CD8-positive, alpha-beta T cell (primary cell): ENCODE measurements at regions of chr12 and their contacts with region 1.

Region 1: DNA sequence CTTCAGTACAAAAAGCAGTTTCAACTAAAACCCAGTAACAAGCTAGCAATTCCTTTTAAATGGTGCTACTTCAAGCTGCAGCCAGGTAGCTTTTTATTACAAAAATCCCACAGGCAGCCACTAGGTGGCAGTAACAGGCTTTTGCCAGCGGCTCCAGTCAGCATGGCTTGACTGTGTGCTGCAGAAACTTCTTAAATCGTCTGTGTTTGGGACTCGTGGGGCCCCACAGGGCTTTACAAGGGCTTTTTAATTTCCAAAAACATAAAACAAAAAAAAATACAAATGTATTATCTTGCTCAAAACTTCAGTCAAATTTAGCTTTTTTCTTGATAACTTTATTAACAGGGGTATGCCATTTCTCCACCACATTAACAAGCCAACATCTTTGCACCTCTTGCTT is 3.6 kb upstream of the CLEC4E start:
- DNase-seq: peak; percentile 46 to 84 (median 75)
- ATAC-seq: peak; percentile 81
- H3K4me3 ChIP-seq: no peak overlapping the region
- H3K4me3 Mint-ChIP-seq: peak overlapping the region; percentile 13
- H3K27ac ChIP-seq: no peak overlapping the region
- H3K27ac Mint-ChIP-seq: no peak overlapping the region
- H3K4me1 ChIP-seq: no peaks in the 10 kb centered on the region
- H3K4me1 Mint-ChIP-seq: peaks cover 9% of the 10 kb centered on the region
- H3K27me3 ChIP-seq: no peaks in the 10 kb centered on the region
- H3K27me3 Mint-ChIP-seq: peaks cover 14% of the 10 kb centered on the region
- CTCF ChIP-seq: peak; percentile 95

Region 2: GRCh38 chr12:8554451-8555195 is 10.3 kb after region 1 on chr12:
- CTCF ChIA-PET with region 1: interaction called, 22 read pairs
- POLR2A ChIA-PET with region 1: interaction called, 3 read pairs
- intact Hi-C with region 1: no loop called
- DNase-seq: no peak
- ATAC-seq: no peak
- H3K4me3 ChIP-seq: no peak overlapping the region
- H3K4me3 Mint-ChIP-seq: no peak overlapping the region
- H3K27ac ChIP-seq: no peak overlapping the region
- H3K27ac Mint-ChIP-seq: no peak overlapping the region
- H3K4me1 ChIP-seq: no peaks in the 10 kb centered on the region
- H3K4me1 Mint-ChIP-seq: no peaks in the 10 kb centered on the region
- H3K27me3 ChIP-seq: no peaks in the 10 kb centered on the region
- H3K27me3 Mint-ChIP-seq: peaks cover 2% of the 10 kb centered on the region
- CTCF ChIP-seq: no peak

Region 3: DNA sequence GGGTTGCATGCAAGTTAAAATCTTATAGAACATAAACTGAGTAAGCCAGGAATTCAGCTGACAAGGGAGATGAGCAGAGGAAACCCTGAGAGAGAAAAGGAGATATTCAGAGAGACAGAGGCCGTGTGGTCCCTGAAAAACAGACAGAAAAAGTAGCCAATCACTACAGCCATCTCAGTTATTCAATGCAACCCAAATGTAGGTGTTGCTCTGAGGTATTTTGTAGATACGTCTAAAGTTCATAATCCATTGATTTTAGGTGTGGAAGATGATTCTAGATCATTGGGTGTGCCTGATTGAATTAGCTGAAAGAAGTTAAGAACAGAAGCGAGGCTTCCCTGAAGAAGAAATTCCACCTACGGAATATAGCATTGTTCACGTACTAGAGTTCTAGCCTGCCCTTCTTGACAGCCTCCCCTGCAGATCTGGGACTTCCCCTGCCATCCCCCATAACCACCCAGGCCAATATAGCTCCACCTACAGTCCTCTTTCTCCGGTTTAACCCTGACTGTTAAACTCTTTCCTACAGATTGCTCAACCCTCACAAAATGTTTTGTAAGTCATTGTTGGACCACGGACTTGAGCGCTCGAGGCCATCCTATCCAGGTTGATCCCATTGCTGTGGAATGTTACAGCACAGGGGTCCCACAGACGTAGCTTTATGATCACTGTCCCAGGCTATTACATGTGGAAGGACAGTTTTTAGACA is 46.7 kb after region 1 on chr12:
- CTCF ChIA-PET with region 1: interaction called, 22 read pairs
- POLR2A ChIA-PET with region 1: no interaction called
- intact Hi-C with region 1: loop called in 1 of 2 experiments (anchors 2 kb)
- DNase-seq: peak in 2 of 9 experiments; percentile 33 to 47
- ATAC-seq: peak; percentile 62
- H3K4me3 ChIP-seq: no peak overlapping the region
- H3K4me3 Mint-ChIP-seq: no peak overlapping the region
- H3K27ac ChIP-seq: no peak overlapping the region
- H3K27ac Mint-ChIP-seq: no peak overlapping the region
- H3K4me1 ChIP-seq: peaks cover 5% of the 10 kb centered on the region
- H3K4me1 Mint-ChIP-seq: peaks cover 8% of the 10 kb centered on the region
- H3K27me3 ChIP-seq: no peaks in the 10 kb centered on the region
- H3K27me3 Mint-ChIP-seq: no peaks in the 10 kb centered on the region
- CTCF ChIP-seq: no peak

Region 4: GRCh38 chr12:8662593-8662992 is 118.3 kb after region 1 on chr12 and contains the start of gene MFAP5:
- CTCF ChIA-PET with region 1: interaction called, 19 read pairs
- POLR2A ChIA-PET with region 1: no interaction called
- intact Hi-C with region 1: no loop called
- DNase-seq: no peak
- ATAC-seq: no peak
- H3K4me3 ChIP-seq: no peak within 1 kb of the TSS
- H3K4me3 Mint-ChIP-seq: no peak within 1 kb of the TSS
- H3K27ac ChIP-seq: no peak within 1 kb of the TSS
- H3K27ac Mint-ChIP-seq: no peak within 1 kb of the TSS
- H3K4me1 ChIP-seq: no peaks in the 10 kb centered on the region
- H3K4me1 Mint-ChIP-seq: no peaks in the 10 kb centered on the region
- H3K27me3 ChIP-seq: no peaks in the 10 kb centered on the region
- H3K27me3 Mint-ChIP-seq: peaks cover 7% of the 10 kb centered on the region
- CTCF ChIP-seq: no peak
- total RNA-seq, gene MFAP5: not detected

Region 5: GRCh38 chr12:8823565-8824300 is 279.4 kb after region 1 on chr12:
- CTCF ChIA-PET with region 1: interaction called, 4 read pairs
- POLR2A ChIA-PET with region 1: no interaction called
- intact Hi-C with region 1: loop called in 1 of 2 experiments (anchors 10 kb)
- DNase-seq: peak in 2 of 9 experiments; percentile 13 to 29
- ATAC-seq: no peak
- H3K4me3 ChIP-seq: no peak overlapping the region
- H3K4me3 Mint-ChIP-seq: no peak overlapping the region
- H3K27ac ChIP-seq: no peak overlapping the region
- H3K27ac Mint-ChIP-seq: no peak overlapping the region
- H3K4me1 ChIP-seq: no peaks in the 10 kb centered on the region
- H3K4me1 Mint-ChIP-seq: no peaks in the 10 kb centered on the region
- H3K27me3 ChIP-seq: no peaks in the 10 kb centered on the region
- H3K27me3 Mint-ChIP-seq: peaks cover 4% of the 10 kb centered on the region
- CTCF ChIP-seq: no peak

Region 6: GRCh38 chr12:8914716-8915526 is 370.6 kb after region 1 on chr12:
- CTCF ChIA-PET with region 1: interaction called, 10 read pairs
- POLR2A ChIA-PET with region 1: no interaction called
- intact Hi-C with region 1: no loop called
- DNase-seq: peak; percentile 26 to 81 (median 60)
- ATAC-seq: peak; percentile 81
- H3K4me3 ChIP-seq: peak overlapping the region; percentile 79 to 82
- H3K4me3 Mint-ChIP-seq: no peak overlapping the region
- H3K27ac ChIP-seq: peak overlapping the region; percentile 44 to 61
- H3K27ac Mint-ChIP-seq: no peak overlapping the region
- H3K4me1 ChIP-seq: peaks cover 23% of the 10 kb centered on the region
- H3K4me1 Mint-ChIP-seq: peaks cover 13% of the 10 kb centered on the region
- H3K27me3 ChIP-seq: no peaks in the 10 kb centered on the region
- H3K27me3 Mint-ChIP-seq: no peaks in the 10 kb centered on the region
- CTCF ChIP-seq: no peak

Region 7: DNA sequence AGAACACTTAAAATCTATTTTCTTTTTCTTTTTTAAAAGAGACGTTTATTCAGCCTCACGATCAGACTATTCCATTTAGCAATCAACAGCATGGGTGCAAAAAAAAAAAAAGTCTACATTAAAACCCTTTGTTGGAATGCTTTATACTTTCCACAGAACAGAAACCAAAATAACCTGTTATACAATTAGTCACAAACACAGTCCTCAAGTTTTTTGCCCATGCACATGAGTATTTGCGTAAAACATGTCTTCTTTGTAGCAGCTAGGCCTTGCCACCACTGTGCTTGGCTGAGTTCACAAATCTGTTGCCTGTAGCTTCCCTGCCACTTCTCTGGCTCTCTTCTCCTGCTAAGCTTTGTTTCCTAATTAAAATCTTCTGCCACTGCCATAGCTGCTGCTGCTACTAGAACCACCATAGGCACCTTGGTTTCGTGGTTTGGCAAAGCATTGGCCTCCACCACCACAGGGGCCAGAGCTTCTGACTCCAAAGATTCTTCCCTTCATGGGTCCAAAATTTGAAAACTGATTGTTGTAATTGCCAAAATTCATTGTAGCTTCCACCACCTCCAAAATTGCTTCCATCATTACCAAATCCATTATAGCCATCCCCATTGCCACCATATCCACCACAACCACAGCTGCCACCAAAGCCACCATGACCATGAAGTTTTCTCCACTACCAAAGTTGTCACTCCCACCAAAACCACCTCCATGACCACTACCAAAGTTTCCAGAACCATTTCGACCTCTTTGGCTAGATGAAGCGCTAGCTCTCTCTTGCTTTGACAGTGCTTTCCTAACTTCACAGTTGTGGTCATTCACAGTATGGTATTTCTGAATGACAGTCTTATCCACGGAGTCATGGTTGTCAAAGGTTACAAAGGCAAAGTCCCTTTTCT is 483.1 kb after region 1 on chr12:
- CTCF ChIA-PET with region 1: no interaction called
- POLR2A ChIA-PET with region 1: no interaction called
- intact Hi-C with region 1: no loop called
- DNase-seq: peak in 4 of 9 experiments; percentile 20 to 59 (median 28)
- ATAC-seq: no peak
- H3K4me3 ChIP-seq: no peak overlapping the region
- H3K4me3 Mint-ChIP-seq: peak overlapping the region; percentile 38
- H3K27ac ChIP-seq: peak overlapping the region in 1 of 2 experiments; percentile 86
- H3K27ac Mint-ChIP-seq: peak overlapping the region; percentile 95
- H3K4me1 ChIP-seq: peaks cover 79% of the 10 kb centered on the region
- H3K4me1 Mint-ChIP-seq: peaks cover 50% of the 10 kb centered on the region
- H3K27me3 ChIP-seq: no peaks in the 10 kb centered on the region
- H3K27me3 Mint-ChIP-seq: no peaks in the 10 kb centered on the region
- CTCF ChIP-seq: no peak